Mammary epithelial cell (primary cell): ENCODE measurements at regions of chr1 and their contacts with region 1.

Region 1: DNA sequence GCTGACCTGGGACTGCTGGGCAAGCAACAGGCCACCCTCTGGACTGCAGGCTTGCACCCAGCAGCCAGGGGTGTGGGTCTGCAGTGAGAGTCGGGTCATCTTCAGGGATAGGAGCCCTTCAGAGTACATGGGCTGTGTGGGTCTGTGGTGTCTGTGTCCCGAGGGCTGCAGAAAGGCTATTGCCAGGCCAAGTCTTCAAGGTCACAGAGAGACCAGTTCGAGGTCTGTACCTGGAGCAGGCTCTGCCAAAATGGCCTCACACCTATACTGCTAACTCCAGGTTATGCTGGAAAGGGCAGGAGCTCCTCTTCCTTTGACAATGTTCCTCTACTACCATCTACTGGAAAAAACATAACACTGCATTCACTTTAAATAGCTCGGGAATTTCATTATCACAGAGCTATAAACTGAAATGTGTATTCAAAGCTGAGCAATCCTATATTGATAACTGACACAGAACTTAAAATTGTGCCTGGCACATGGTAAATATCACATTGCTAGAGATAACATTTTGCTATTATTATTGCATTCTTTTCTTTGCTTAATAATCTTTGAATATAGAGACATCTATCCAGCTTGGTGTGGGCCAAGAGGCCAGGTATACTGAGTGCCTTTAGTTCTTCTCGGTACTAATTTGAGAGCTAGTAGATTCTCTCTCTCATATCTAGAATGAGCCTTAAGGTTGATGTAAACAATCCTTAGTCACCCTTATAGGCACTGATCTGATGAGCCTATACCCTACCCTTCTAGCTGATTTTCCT is 6.9 kb upstream of the DNAH14 start:
- DNase-seq: peak; percentile 39
- H3K4me3 ChIP-seq: no peak overlapping the region
- H3K27ac ChIP-seq: no peak overlapping the region
- H3K4me1 ChIP-seq: no peaks in the 10 kb centered on the region
- H3K27me3 ChIP-seq: no peaks in the 10 kb centered on the region
- CTCF ChIP-seq: peak; percentile 73 to 83

Region 2: GRCh38 chr1:224113918-224114786 is 808.4 kb before region 1 on chr1 and contains the start of gene FBXO28:
- CTCF ChIA-PET with region 1: no interaction called
- dilution Hi-C with region 1: no loop called
- in situ Hi-C with region 1: no loop called
- intact Hi-C with region 1: loop called (anchors 1 kb)
- DNase-seq: peak; percentile 88
- H3K4me3 ChIP-seq: peak within 1 kb of the TSS; percentile 58 to 85 (median 75)
- H3K27ac ChIP-seq: peak within 1 kb of the TSS; percentile 72
- H3K4me1 ChIP-seq: peaks cover 16% of the 10 kb centered on the region
- H3K27me3 ChIP-seq: no peaks in the 10 kb centered on the region
- CTCF ChIP-seq: no peak
- total RNA-seq, gene FBXO28: 41.0 to 49.4 TPM

Region 3: GRCh38 chr1:224513787-224514209 is 408.8 kb before region 1 on chr1:
- CTCF ChIA-PET with region 1: interaction called, 3 read pairs
- dilution Hi-C with region 1: no loop called
- in situ Hi-C with region 1: loop called (anchors 10 kb)
- intact Hi-C with region 1: loop called (anchors 1 kb)
- DNase-seq: peak; percentile 71
- H3K4me3 ChIP-seq: no peak overlapping the region
- H3K27ac ChIP-seq: no peak overlapping the region
- H3K4me1 ChIP-seq: peaks cover 10% of the 10 kb centered on the region
- H3K27me3 ChIP-seq: no peaks in the 10 kb centered on the region
- CTCF ChIP-seq: peak; percentile 69 to 89

Region 4: DNA sequence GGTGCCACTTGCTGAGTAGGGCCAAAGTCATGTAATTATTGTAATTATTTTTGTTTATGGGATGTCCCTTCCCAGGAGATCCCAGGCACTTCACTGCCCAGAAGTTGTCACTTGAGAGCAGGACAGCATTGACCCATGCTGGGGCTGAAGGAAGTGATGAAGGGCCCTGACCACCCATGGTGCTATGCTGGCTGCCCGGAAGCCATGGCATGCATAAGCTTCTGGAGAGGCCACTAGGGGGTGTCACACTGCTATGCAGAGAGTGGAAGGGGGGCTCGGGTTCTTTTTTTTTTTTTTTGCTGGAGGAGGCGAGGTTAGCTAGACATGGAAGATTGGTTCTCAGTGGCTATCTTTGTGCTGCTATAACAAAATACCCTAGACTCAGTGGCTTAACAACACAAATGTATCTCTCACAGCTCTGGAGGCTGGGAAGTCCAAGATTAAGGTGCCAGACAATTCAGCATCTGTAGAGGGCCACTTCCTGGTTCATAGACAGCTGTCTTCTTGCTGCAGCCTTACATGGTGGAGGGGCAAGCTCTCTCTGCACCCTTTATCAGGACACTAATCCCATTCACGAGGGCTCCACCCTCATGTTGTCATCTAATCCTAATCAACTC is 221.6 kb before region 1 on chr1:
- CTCF ChIA-PET with region 1: no interaction called
- dilution Hi-C with region 1: no loop called
- in situ Hi-C with region 1: no loop called
- intact Hi-C with region 1: loop called (anchors 5 kb)
- DNase-seq: no peak
- H3K4me3 ChIP-seq: no peak overlapping the region
- H3K27ac ChIP-seq: no peak overlapping the region
- H3K4me1 ChIP-seq: no peaks in the 10 kb centered on the region
- H3K27me3 ChIP-seq: no peaks in the 10 kb centered on the region
- CTCF ChIP-seq: peak; percentile 35 to 55

Region 5: GRCh38 chr1:224873434-224874369 is 48.9 kb before region 1 on chr1:
- CTCF ChIA-PET with region 1: no interaction called
- dilution Hi-C with region 1: no loop called
- in situ Hi-C with region 1: no loop called
- intact Hi-C with region 1: no loop called
- DNase-seq: peak; percentile 30
- H3K4me3 ChIP-seq: no peak overlapping the region
- H3K27ac ChIP-seq: no peak overlapping the region
- H3K4me1 ChIP-seq: peaks cover 4% of the 10 kb centered on the region
- H3K27me3 ChIP-seq: peaks cover 2% of the 10 kb centered on the region
- CTCF ChIP-seq: no peak

Region 6: DNA sequence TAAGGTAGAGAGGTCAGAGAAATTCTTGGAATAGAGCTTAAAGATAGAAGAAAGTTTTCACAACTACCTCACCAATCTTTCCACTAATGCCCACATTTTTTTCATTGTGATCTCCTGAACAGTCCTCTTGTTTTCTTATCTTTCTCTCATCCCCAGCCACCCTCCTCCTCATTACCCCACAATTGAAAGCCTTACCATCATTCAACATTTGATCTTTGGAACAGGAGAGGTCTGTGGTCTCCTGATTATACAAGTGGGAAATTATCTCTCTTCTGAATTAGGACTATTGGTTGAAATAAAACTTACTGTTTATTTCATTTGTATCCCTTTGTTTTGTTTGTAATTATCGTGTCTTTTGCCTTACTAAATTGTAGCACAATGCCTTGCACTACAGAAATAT is 36.5 kb after region 1 on chr1:
- CTCF ChIA-PET with region 1: no interaction called
- dilution Hi-C with region 1: no loop called
- in situ Hi-C with region 1: no loop called
- intact Hi-C with region 1: no loop called
- DNase-seq: no peak
- H3K4me3 ChIP-seq: no peak overlapping the region
- H3K27ac ChIP-seq: no peak overlapping the region
- H3K4me1 ChIP-seq: no peaks in the 10 kb centered on the region
- H3K27me3 ChIP-seq: no peaks in the 10 kb centered on the region
- CTCF ChIP-seq: no peak

Region 7: GRCh38 chr1:225191199-225191753 is 268.7 kb after region 1 on chr1:
- CTCF ChIA-PET with region 1: no interaction called
- dilution Hi-C with region 1: no loop called
- in situ Hi-C with region 1: no loop called
- intact Hi-C with region 1: no loop called
- DNase-seq: no peak
- H3K4me3 ChIP-seq: no peak overlapping the region
- H3K27ac ChIP-seq: no peak overlapping the region
- H3K4me1 ChIP-seq: no peaks in the 10 kb centered on the region
- H3K27me3 ChIP-seq: no peaks in the 10 kb centered on the region
- CTCF ChIP-seq: no peak